Activated CD4-positive, alpha-beta memory T cell treated with anti-CD3 and anti-CD28 coated beads for 36 hours (primary cell): ENCODE measurements at regions of chr1 and their contacts with region 1.

Region 1: GRCh38 chr1:26998429-26999300 is 5.2 kb downstream of the TRNP1 start:
- DNase-seq: no peak
- H3K4me3 Mint-ChIP-seq: no peak overlapping the region
- H3K27ac Mint-ChIP-seq: no peak overlapping the region
- H3K4me1 Mint-ChIP-seq: peaks cover 4% of the 10 kb centered on the region
- H3K27me3 Mint-ChIP-seq: peaks cover 29% of the 10 kb centered on the region

Region 2: DNA sequence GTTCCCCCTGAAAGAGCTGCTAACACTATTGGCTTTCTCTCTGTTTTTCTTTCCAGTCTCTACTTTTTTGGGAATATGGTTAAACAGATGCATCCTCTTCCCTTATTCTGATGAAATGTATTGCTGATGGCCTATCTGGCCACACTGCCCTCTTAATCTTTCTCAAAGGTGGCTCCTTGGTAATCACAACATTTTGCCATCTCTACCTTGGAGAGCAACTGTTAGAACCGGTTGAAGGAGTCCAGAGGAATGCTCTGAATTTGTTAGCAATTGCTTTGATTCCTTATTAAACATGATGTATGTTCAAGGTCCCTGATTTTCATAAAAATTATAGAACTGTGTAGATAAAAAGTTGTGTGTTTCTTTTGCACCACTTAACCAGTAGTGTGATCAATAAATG is 352.9 kb before region 1 on chr1:
- CTCF ChIA-PET with region 1: no interaction called
- POLR2A ChIA-PET with region 1: no interaction called
- intact Hi-C with region 1: no loop called
- DNase-seq: no peak
- H3K4me3 Mint-ChIP-seq: no peak overlapping the region
- H3K27ac Mint-ChIP-seq: no peak overlapping the region
- H3K4me1 Mint-ChIP-seq: no peaks in the 10 kb centered on the region
- H3K27me3 Mint-ChIP-seq: no peaks in the 10 kb centered on the region

Region 3: DNA sequence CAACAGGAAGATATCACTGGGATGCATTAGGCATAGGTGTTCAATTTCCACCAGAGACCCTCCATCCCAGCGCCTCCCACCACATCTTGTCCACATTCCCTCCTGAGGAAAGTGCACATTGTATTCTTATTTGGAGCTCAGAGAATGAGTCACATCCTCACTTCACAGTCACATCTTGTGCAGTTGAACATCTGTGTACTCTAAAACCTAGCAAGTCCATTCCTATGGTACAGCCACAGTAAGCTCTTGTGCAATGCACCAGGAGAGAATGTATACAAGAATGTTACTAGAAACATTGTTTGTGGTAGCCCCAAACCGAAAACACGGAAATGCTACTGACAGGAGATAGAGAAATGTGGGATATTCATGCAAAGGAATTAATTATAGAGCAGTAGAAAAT is 36.8 kb before region 1 on chr1:
- CTCF ChIA-PET with region 1: interaction called, 14 read pairs
- POLR2A ChIA-PET with region 1: no interaction called
- intact Hi-C with region 1: no loop called
- DNase-seq: no peak
- H3K4me3 Mint-ChIP-seq: no peak overlapping the region
- H3K27ac Mint-ChIP-seq: no peak overlapping the region
- H3K4me1 Mint-ChIP-seq: peaks cover 4% of the 10 kb centered on the region
- H3K27me3 Mint-ChIP-seq: peaks cover 23% of the 10 kb centered on the region

Region 4: GRCh38 chr1:27010989-27011764 is 12.5 kb after region 1 on chr1:
- CTCF ChIA-PET with region 1: interaction called, 15 read pairs
- POLR2A ChIA-PET with region 1: no interaction called
- intact Hi-C with region 1: no loop called
- DNase-seq: no peak
- H3K4me3 Mint-ChIP-seq: no peak overlapping the region
- H3K27ac Mint-ChIP-seq: no peak overlapping the region
- H3K4me1 Mint-ChIP-seq: peaks cover 11% of the 10 kb centered on the region
- H3K27me3 Mint-ChIP-seq: peaks cover 23% of the 10 kb centered on the region

Region 5: DNA sequence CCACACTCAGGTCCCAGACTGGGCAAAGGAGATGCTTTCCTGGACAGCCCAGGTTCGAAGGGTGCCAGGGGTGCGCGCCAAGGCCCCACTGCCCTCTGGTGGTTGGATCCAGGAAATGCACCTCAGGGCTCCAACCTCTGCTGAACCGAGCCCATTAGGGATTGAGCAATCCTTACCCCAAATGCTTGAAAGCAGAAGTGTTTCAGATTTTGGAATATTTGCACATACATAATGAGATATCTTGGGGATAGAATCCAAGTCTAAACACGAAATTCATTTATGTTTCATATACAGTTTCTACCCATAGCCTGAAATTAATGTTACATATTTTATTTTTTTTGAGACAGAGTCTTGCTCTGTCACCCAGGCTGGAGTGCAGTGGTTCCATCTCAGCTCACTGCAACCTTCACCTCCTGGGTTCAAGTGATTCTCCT is 98.8 kb after region 1 on chr1:
- CTCF ChIA-PET with region 1: interaction called, 21 read pairs
- POLR2A ChIA-PET with region 1: no interaction called
- intact Hi-C with region 1: loop called (anchors 1 kb)
- DNase-seq: peak; percentile 85
- H3K4me3 Mint-ChIP-seq: no peak overlapping the region
- H3K27ac Mint-ChIP-seq: no peak overlapping the region
- H3K4me1 Mint-ChIP-seq: peaks cover 7% of the 10 kb centered on the region
- H3K27me3 Mint-ChIP-seq: no peaks in the 10 kb centered on the region